ENCODE measurements at regions of chr10 and their contacts with region 1.

Region 1: DNA sequence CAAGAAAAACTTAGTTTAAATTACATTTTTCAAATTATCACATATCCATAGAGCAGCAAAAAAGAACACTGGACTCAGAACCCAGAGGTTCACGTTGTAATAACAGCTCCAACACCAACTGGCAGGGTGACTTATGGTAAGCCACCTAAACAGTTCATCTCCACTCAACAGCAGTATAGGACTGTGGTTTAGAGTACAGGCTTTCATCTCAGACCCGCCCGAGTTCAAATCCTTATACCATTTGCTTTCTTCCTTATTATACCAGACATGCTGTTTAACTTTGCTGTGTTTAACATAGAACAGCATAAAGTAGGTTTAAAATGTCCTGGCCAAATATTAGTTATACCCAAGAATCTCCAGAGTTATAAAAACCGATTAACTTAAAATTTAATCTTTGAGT is 97.9 kb downstream of the ARHGAP21 start:
- DNase-seq: no peak
- ATAC-seq: no peak
- H3K4me3 ChIP-seq: no peak overlapping the region
- H3K27ac ChIP-seq: no peak overlapping the region
- H3K4me1 ChIP-seq: peaks cover 4 to 42% (median 26%) of the 10 kb centered on the region in 9 donors
- H3K27me3 ChIP-seq: no peaks in the 10 kb centered on the region
- CTCF ChIP-seq: no peak

Region 2: GRCh38 chr10:24541239-24542048 is 84.3 kb before region 1 on chr10:
- intact Hi-C with region 1: no loop called
- DNase-seq: no peak
- ATAC-seq: no peak
- H3K4me3 ChIP-seq: no peak overlapping the region
- H3K27ac ChIP-seq: no peak overlapping the region
- H3K4me1 ChIP-seq: no peaks in the 10 kb centered on the region
- H3K27me3 ChIP-seq: no peaks in the 10 kb centered on the region
- CTCF ChIP-seq: no peak

Region 3: GRCh38 chr10:24851629-24852028 is 225.9 kb after region 1 on chr10:
- intact Hi-C with region 1: no loop called
- DNase-seq: no peak
- ATAC-seq: no peak
- H3K4me3 ChIP-seq: no peak overlapping the region
- H3K27ac ChIP-seq: no peak overlapping the region
- H3K4me1 ChIP-seq: peaks cover 0 to 20% (median 5%) of the 10 kb centered on the region in 9 donors
- H3K27me3 ChIP-seq: no peaks in the 10 kb centered on the region
- CTCF ChIP-seq: no peak

Region 4: GRCh38 chr10:24982319-24983112 is 356.7 kb after region 1 on chr10:
- intact Hi-C with region 1: loop called in 2 of 10 experiments (anchors 5 to 10 kb)
- DNase-seq: no peak
- ATAC-seq: no peak
- H3K4me3 ChIP-seq: no peak overlapping the region
- H3K27ac ChIP-seq: peak overlapping the region in 2 of 10 donors; percentile 45 to 69
- H3K4me1 ChIP-seq: peaks cover 0 to 38% (median 15%) of the 10 kb centered on the region in 9 donors
- H3K27me3 ChIP-seq: no peaks in the 10 kb centered on the region
- CTCF ChIP-seq: no peak

Measured in heart right ventricle (tissue), 16 donors.